ENCODE measurements at regions of chr14 and their contacts with region 1.

Region 1: GRCh38 chr14:69818757-69819191 is 21.7 kb upstream of the SLC10A1 start:
- DNase-seq: peak; percentile 9
- H3K4me3 ChIP-seq: no peak overlapping the region
- CTCF ChIP-seq: peak; percentile 59

Region 2: GRCh38 chr14:70018230-70018629 is 199.5 kb after region 1 on chr14:
- CTCF ChIA-PET with region 1: interaction called, 10 read pairs
- POLR2A ChIA-PET with region 1: no interaction called
- DNase-seq: no peak
- H3K4me3 ChIP-seq: no peak overlapping the region
- CTCF ChIP-seq: no peak

Region 3: DNA sequence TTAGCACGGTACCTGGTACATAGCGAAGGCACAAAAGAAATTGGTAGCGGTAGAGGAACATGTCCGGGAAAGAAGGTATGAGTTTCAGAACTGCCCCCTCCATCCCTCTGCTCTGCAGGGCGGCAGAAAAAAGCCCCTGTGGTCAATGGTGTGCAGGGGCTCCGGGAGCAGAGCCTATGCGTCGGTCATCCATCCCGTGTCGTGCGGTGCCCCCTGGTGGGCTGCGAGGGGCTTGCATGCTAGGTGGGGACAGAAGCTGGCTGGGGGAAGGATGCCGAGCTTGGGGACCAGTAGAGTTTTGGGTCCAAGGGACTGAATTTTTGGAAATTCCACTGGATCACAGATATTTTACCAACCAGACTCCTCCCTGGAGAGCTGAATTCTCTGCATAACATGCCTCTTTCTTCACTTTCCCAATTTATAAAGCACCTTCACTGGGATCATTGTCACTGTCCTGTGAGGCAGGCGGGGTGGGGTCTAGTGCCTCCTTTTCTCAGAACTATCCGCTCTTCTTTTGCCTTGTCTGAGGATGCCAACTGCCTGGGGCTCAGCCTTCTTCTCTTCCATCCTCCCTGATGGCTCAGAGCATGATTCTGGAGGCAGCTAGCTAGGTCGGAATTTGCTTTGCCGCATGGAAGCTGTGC is 209.1 kb after region 1 on chr14:
- CTCF ChIA-PET with region 1: interaction called, 118 read pairs
- POLR2A ChIA-PET with region 1: no interaction called
- DNase-seq: no peak
- H3K4me3 ChIP-seq: no peak overlapping the region
- CTCF ChIP-seq: peak; percentile 96

Region 4: GRCh38 chr14:70073924-70074566 is 255.3 kb after region 1 on chr14:
- CTCF ChIA-PET with region 1: interaction called, 23 read pairs
- POLR2A ChIA-PET with region 1: no interaction called
- DNase-seq: no peak
- H3K4me3 ChIP-seq: no peak overlapping the region
- CTCF ChIP-seq: peak; percentile 73